ENCODE measurements at regions of chr17 and their contacts with region 1.

Region 1: GRCh38 chr17:5055543-5055942 is 20.3 kb upstream of the SLC52A1 start:
- DNase-seq: no peak
- ATAC-seq: no peak
- H3K4me3 ChIP-seq: no peak overlapping the region
- H3K27ac ChIP-seq: no peak overlapping the region
- H3K4me1 ChIP-seq: no peaks in the 10 kb centered on the region
- H3K27me3 ChIP-seq: peaks cover 0 to 12% (median 0%) of the 10 kb centered on the region in 7 donors
- CTCF ChIP-seq: no peak

Region 2: GRCh38 chr17:4980644-4981216 is 74.8 kb before region 1 on chr17:
- intact Hi-C with region 1: loop called in 4 of 10 experiments (anchors 5 kb)
- DNase-seq: no peak
- ATAC-seq: peak; percentile 15 to 65 (median 54)
- H3K4me3 ChIP-seq: no peak overlapping the region
- H3K27ac ChIP-seq: peak overlapping the region in 1 of 10 donors; percentile 78
- H3K4me1 ChIP-seq: peaks cover 0 to 50% (median 6%) of the 10 kb centered on the region in 9 donors
- H3K27me3 ChIP-seq: no peaks in the 10 kb centered on the region
- CTCF ChIP-seq: peak; percentile 61 to 78 (median 74)

Region 3: GRCh38 chr17:5031365-5032082 is 24.0 kb before region 1 on chr17:
- intact Hi-C with region 1: loop called in 1 of 10 experiments (anchors 5 kb)
- DNase-seq: peak; percentile 77 to 79
- ATAC-seq: peak; percentile 48 to 87 (median 80)
- H3K4me3 ChIP-seq: peak overlapping the region in 9 of 10 donors; percentile 28 to 56 (median 49)
- H3K27ac ChIP-seq: peak overlapping the region in 7 of 10 donors; percentile 1 to 80 (median 40)
- H3K4me1 ChIP-seq: peaks cover 0 to 24% (median 11%) of the 10 kb centered on the region in 9 donors
- H3K27me3 ChIP-seq: peaks cover 0 to 19% (median 6%) of the 10 kb centered on the region in 7 donors
- CTCF ChIP-seq: peak; percentile 69 to 83 (median 79)

Measured in heart right ventricle (tissue), 16 donors.